Left colon (tissue), 2 donors: ENCODE measurements at regions of chr2 and their contacts with region 1.

Region 1: GRCh38 chr2:95159690-95160449 is at the start of gene ZNF514:
- DNase-seq: peak; percentile 78 to 87
- ATAC-seq: peak; percentile 87
- total RNA-seq, gene ZNF514: 17.4 to 18.6 TPM

Region 2: GRCh38 chr2:95121407-95122196 is 38.3 kb before region 1 on chr2 and contains the start of gene MRPS5:
- intact Hi-C with region 1: loop called in 1 of 2 experiments (anchors 5 kb)
- DNase-seq: peak; percentile 80 to 93
- ATAC-seq: peak; percentile 96
- total RNA-seq, gene MRPS5: 55.8 to 73.1 TPM